Activated CD4-positive, alpha-beta memory T cell treated with anti-CD3 and anti-CD28 coated beads for 36 hours (primary cell): ENCODE measurements at regions of chr12 and their contacts with region 1.

Region 1: DNA sequence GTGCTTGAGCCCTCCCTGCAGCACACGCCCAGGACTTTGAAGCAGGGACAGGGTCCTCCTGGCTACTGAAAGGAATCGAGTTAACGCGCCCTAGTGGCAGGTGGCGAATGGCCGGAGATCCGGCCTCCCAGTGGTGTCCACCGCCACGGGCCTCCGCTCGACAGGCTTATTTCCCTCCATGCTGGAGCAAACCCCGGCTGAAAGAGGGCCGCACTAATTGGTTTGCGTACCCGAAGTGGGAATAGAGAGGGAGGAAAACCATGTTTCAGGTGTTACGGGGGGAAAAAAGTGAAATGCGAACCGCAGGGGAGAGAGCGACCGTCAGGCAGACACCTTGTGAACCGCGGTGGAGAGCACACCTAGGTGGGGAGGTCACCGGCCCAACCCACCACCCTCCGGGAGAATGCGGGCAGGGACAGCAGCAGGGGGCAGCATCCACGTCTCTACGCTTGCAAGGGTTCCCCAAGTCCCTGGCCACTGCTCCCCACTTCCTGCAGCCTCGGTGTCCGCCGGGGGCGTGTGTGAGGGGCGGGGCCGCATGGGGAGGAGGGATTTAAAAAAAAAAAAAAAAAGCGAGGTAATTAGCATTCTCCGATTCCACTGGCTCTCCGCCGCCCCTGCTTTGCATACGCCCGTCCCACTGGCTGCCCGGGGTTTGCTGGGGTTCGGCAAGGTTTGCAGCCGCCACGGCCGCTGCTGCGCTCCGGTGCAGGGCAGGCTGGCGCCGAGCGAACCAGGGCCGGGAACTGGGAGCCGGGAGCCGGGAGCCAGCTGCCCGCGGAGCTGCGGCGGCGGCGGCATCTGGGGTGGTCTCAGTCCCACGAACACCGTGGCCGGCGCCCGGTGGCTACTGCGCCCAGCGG is 224.6 kb upstream of the CRY1 start:
- DNase-seq: peak; percentile 93
- H3K4me3 Mint-ChIP-seq: peak overlapping the region; percentile 82
- H3K27ac Mint-ChIP-seq: no peak overlapping the region
- H3K4me1 Mint-ChIP-seq: peaks cover 26% of the 10 kb centered on the region
- H3K27me3 Mint-ChIP-seq: peaks cover 8% of the 10 kb centered on the region

Region 2: GRCh38 chr12:107328442-107329133 is 10.6 kb after region 1 on chr12:
- CTCF ChIA-PET with region 1: interaction called, 6 read pairs
- POLR2A ChIA-PET with region 1: interaction called, 8 read pairs
- intact Hi-C with region 1: loop called (anchors 1 kb)
- DNase-seq: peak; percentile 51
- H3K4me3 Mint-ChIP-seq: no peak overlapping the region
- H3K27ac Mint-ChIP-seq: no peak overlapping the region
- H3K4me1 Mint-ChIP-seq: peaks cover 63% of the 10 kb centered on the region
- H3K27me3 Mint-ChIP-seq: no peaks in the 10 kb centered on the region

Region 3: DNA sequence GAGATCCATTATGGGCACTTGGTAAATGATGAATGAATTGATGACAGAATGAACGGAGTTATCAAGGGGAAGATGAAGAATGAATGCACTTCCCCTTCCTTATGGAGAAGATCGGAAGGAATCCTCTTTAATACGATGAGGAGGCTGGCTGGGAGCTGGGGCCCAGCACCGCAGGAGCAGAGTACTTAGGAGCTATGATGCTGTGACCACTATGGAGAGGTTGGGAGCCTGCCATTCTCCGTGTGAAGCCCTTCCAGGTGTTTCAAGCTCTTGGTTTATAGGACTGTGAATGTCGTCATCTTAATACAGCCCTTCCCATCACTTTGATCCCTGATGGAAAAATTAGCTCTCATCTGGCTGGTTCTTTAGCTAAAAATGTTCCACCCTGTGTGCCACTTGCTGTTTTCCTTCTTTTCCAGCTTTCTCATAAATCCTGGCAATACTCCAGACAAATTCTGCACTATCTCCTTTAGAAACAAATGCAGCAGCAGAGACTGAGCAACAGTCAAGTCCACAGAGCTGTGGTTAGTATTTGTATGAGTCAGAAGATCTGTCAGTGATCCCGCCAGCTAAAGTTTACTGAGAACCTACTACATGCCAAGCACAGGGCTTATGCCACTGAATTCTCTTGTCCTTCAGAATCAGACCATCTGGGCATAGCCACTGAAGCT is 38.4 kb after region 1 on chr12:
- CTCF ChIA-PET with region 1: interaction called, 7 read pairs
- POLR2A ChIA-PET with region 1: interaction called, 4 read pairs
- intact Hi-C with region 1: loop called (anchors 1 kb)
- DNase-seq: no peak
- H3K4me3 Mint-ChIP-seq: no peak overlapping the region
- H3K27ac Mint-ChIP-seq: no peak overlapping the region
- H3K4me1 Mint-ChIP-seq: peaks cover 34% of the 10 kb centered on the region
- H3K27me3 Mint-ChIP-seq: no peaks in the 10 kb centered on the region

Region 4: DNA sequence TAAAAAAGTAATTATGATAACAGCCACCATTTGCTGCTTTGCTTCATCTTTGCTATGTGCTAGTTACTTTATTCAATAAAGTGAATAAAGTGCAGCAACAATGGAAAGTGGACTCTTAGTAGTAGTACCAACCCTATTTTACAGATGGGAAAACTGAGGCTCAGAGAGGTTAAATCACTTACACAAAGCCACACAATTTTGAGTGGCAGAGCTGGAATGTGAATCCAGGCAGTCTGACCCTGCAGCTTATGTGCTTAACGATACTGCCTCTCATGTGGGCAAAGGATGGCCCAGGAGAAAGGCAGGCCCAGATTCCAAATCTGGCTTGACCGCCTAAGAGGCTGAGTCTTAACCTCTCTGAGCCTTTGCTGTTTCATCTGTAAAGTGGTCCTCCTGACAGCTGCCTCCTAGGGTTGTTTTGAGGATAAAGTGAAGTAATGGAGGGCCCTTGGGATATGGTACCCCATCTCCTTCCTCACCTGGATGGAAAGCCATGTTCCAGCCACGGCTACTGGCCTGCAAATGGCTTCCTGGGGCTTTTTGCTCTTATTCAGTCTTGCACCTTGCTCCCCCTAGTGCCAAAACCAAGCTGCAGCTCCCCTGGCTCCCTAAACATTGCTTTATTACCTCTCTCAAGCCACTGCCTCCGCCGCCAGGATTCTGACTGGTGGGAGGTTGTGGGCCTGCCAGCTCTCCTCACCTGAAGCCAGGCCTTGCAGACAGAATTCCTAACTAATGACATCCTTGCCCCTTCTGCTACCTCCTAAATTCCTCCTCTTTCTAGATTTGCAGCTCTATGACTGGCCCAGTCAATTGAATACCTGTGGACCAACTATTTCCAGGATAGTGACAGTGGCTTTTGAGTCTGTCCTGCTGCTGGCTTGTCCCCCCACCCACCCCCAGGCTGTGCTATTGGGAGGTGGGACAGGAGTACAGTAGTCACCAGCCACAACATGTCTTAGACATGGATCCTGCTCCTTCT is 84.3 kb after region 1 on chr12:
- CTCF ChIA-PET with region 1: interaction called, 24 read pairs
- POLR2A ChIA-PET with region 1: interaction called, 5 read pairs
- intact Hi-C with region 1: loop called (anchors 1 kb)
- DNase-seq: peak; percentile 77
- H3K4me3 Mint-ChIP-seq: no peak overlapping the region
- H3K27ac Mint-ChIP-seq: no peak overlapping the region
- H3K4me1 Mint-ChIP-seq: peaks cover 6% of the 10 kb centered on the region
- H3K27me3 Mint-ChIP-seq: no peaks in the 10 kb centered on the region

Region 5: GRCh38 chr12:107418981-107419380 is 101.0 kb after region 1 on chr12:
- CTCF ChIA-PET with region 1: no interaction called
- POLR2A ChIA-PET with region 1: no interaction called
- intact Hi-C with region 1: no loop called
- DNase-seq: no peak
- H3K4me3 Mint-ChIP-seq: no peak overlapping the region
- H3K27ac Mint-ChIP-seq: no peak overlapping the region
- H3K4me1 Mint-ChIP-seq: no peaks in the 10 kb centered on the region
- H3K27me3 Mint-ChIP-seq: no peaks in the 10 kb centered on the region

Region 6: GRCh38 chr12:107685360-107686248 is 367.6 kb after region 1 on chr12 and contains the start of gene PWP1:
- CTCF ChIA-PET with region 1: no interaction called
- POLR2A ChIA-PET with region 1: no interaction called
- intact Hi-C with region 1: loop called (anchors 2 kb)
- DNase-seq: peak; percentile 96
- H3K4me3 Mint-ChIP-seq: peak within 1 kb of the TSS; percentile 92
- H3K27ac Mint-ChIP-seq: peak within 1 kb of the TSS; percentile 98
- H3K4me1 Mint-ChIP-seq: peaks cover 25% of the 10 kb centered on the region
- H3K27me3 Mint-ChIP-seq: peaks cover 1% of the 10 kb centered on the region
- total RNA-seq, gene PWP1: 44.0 to 47.0 TPM

Region 7: GRCh38 chr12:107736914-107737313 is 418.9 kb after region 1 on chr12:
- CTCF ChIA-PET with region 1: no interaction called
- POLR2A ChIA-PET with region 1: no interaction called
- intact Hi-C with region 1: no loop called
- DNase-seq: no peak
- H3K4me3 Mint-ChIP-seq: no peak overlapping the region
- H3K27ac Mint-ChIP-seq: no peak overlapping the region
- H3K4me1 Mint-ChIP-seq: no peaks in the 10 kb centered on the region
- H3K27me3 Mint-ChIP-seq: no peaks in the 10 kb centered on the region